ENCODE measurements at regions of chr22 and their contacts with region 1.

Region 1: GRCh38 chr22:19447388-19448075 is at the start of gene C22orf39:
- DNase-seq: peak; percentile 94
- H3K4me3 ChIP-seq: peak within 1 kb of the TSS; percentile 80 to 92 (median 89)
- H3K27ac ChIP-seq: peak within 1 kb of the TSS; percentile 49
- H3K4me1 ChIP-seq: peaks cover 11% of the 10 kb centered on the region
- H3K27me3 ChIP-seq: no peaks in the 10 kb centered on the region
- CTCF ChIP-seq: no peak
- POLR2A ChIP-seq: peak; percentile 77
- total RNA-seq, gene C22orf39: 25.0 and 26.1 TPM in 2 replicates

Region 2: DNA sequence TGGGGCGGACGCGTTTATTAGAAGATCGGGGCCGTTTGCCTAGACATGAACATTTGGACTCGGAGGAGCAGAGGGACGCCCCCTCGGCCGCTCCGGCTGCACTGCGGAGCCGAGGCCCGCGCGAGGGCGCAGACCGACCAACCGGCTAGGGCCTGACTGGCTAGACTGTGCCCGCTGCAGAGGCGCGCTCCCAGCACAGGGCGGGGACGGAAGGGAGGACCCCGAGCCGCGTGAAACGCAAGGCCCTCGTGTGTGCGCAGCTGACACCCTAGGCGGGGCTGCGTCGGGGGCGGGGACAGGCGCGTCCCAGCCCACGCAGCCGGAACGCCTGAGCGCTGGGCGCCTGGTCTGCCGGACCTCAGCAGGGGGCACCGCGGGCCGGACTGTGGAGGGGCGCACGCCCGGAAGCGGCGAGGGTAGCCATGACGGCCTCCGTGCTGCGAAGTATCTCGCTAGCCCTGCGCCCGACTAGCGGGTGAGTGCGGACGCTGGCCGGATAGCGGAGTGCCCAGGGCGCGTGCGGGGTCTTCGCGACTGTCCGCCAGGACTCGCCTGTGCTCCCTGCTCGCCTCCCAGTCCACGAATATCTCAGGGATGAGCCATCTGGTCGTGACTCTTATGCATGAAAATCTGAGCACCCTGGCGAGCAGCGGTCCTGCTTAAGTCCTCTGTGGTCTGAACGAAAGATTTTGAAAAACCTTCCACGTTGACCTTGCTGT is 15.2 kb before region 1 on chr22 and contains the start of gene MRPL40:
- CTCF ChIA-PET with region 1: interaction called, 4 read pairs
- POLR2A ChIA-PET with region 1: interaction called, 6 read pairs
- dilution Hi-C with region 1: no loop called
- intact Hi-C with region 1: loop called (anchors 1 kb)
- DNase-seq: peak; percentile 94
- H3K4me3 ChIP-seq: peak within 1 kb of the TSS; percentile 86 to 88 (median 86)
- H3K27ac ChIP-seq: peak within 1 kb of the TSS; percentile 75
- H3K4me1 ChIP-seq: peaks cover 17% of the 10 kb centered on the region
- H3K27me3 ChIP-seq: no peaks in the 10 kb centered on the region
- CTCF ChIP-seq: no peak
- POLR2A ChIP-seq: peak; percentile 95
- total RNA-seq, gene MRPL40: 27.4 and 30.6 TPM in 2 replicates

Measured in endothelial cell of umbilical vein (primary cell).